CD8-positive, alpha-beta T cell (primary cell): ENCODE measurements at regions of chr13 and their contacts with region 1.

Region 1: GRCh38 chr13:21164631-21165030 is 11.7 kb downstream of the SKA3 start:
- DNase-seq: no peak
- ATAC-seq: no peak
- H3K4me3 ChIP-seq: no peak overlapping the region
- H3K4me3 Mint-ChIP-seq: no peak overlapping the region
- H3K27ac ChIP-seq: no peak overlapping the region
- H3K27ac Mint-ChIP-seq: no peak overlapping the region
- H3K4me1 ChIP-seq: no peaks in the 10 kb centered on the region
- H3K4me1 Mint-ChIP-seq: no peaks in the 10 kb centered on the region
- H3K27me3 ChIP-seq: no peaks in the 10 kb centered on the region
- H3K27me3 Mint-ChIP-seq: no peaks in the 10 kb centered on the region
- CTCF ChIP-seq: no peak

Region 2: GRCh38 chr13:21034603-21035191 is 129.9 kb before region 1 on chr13:
- CTCF ChIA-PET with region 1: no interaction called
- POLR2A ChIA-PET with region 1: no interaction called
- intact Hi-C with region 1: no loop called
- DNase-seq: no peak
- ATAC-seq: no peak
- H3K4me3 ChIP-seq: no peak overlapping the region
- H3K4me3 Mint-ChIP-seq: no peak overlapping the region
- H3K27ac ChIP-seq: no peak overlapping the region
- H3K27ac Mint-ChIP-seq: no peak overlapping the region
- H3K4me1 ChIP-seq: peaks cover 11% of the 10 kb centered on the region
- H3K4me1 Mint-ChIP-seq: peaks cover 9% of the 10 kb centered on the region
- H3K27me3 ChIP-seq: no peaks in the 10 kb centered on the region
- H3K27me3 Mint-ChIP-seq: no peaks in the 10 kb centered on the region
- CTCF ChIP-seq: no peak

Region 3: GRCh38 chr13:21234526-21234925 is 69.9 kb after region 1 on chr13:
- CTCF ChIA-PET with region 1: no interaction called
- POLR2A ChIA-PET with region 1: no interaction called
- intact Hi-C with region 1: loop called in 1 of 2 experiments (anchors 2 kb)
- DNase-seq: no peak
- ATAC-seq: no peak
- H3K4me3 ChIP-seq: no peak overlapping the region
- H3K4me3 Mint-ChIP-seq: no peak overlapping the region
- H3K27ac ChIP-seq: no peak overlapping the region
- H3K27ac Mint-ChIP-seq: no peak overlapping the region
- H3K4me1 ChIP-seq: no peaks in the 10 kb centered on the region
- H3K4me1 Mint-ChIP-seq: no peaks in the 10 kb centered on the region
- H3K27me3 ChIP-seq: no peaks in the 10 kb centered on the region
- H3K27me3 Mint-ChIP-seq: peaks cover 2% of the 10 kb centered on the region
- CTCF ChIP-seq: no peak